ENCODE measurements at regions of chr12 and their contacts with region 1.

Region 1: DNA sequence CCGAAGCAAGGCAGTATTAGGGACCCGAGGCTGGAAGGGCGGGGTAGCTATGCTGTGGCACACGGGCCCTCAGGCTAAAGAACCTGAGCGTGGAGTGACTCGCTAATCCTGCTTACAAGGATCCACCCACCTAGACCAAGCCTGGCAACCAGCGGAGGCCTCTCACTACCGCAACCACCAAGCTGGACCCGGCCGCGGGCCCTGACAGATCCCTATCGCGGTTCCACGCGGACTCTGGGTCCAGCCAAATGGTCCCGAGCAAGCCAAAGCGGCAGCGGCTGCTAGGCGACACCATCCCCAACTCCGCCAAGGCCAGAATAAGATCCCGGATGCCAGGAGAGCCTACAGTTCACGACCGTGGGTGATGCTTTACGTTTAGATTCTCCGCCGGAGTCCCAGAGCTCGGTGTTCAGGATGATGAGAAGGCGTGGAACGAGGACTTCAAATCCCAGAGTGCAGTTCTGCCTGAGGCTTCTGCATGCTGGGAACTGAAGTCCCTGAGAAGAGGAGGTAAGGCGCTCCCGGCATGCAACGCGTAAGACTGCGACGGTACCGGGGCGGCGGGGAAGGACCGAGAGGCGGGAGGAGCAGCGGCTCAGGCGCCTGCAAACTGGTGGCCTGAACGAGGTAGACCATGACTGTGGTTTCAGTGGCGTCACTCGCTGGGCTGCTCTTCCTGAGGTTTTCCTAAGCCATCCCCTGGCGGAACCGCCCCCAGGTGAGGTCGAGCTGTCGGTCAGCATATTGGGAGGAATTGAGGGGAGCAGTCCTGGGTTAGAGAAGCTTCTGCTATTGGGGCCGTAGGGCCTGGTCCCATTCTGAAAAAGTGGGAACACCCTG is at the starts of genes CEP290 and TMTC3:
- DNase-seq: peak; percentile 100
- H3K4me3 ChIP-seq: peak within 1 kb of the TSS; percentile 80 to 82 (median 82)
- H3K27ac ChIP-seq: peak within 1 kb of the TSS; percentile 90
- H3K4me1 ChIP-seq: peaks cover 31% of the 10 kb centered on the region
- H3K27me3 ChIP-seq: no peaks in the 10 kb centered on the region
- CTCF ChIP-seq: no peak
- total RNA-seq, gene CEP290: 20.0 to 20.5 TPM
- total RNA-seq, gene TMTC3: 46.3 to 97.0 TPM

Region 2: DNA sequence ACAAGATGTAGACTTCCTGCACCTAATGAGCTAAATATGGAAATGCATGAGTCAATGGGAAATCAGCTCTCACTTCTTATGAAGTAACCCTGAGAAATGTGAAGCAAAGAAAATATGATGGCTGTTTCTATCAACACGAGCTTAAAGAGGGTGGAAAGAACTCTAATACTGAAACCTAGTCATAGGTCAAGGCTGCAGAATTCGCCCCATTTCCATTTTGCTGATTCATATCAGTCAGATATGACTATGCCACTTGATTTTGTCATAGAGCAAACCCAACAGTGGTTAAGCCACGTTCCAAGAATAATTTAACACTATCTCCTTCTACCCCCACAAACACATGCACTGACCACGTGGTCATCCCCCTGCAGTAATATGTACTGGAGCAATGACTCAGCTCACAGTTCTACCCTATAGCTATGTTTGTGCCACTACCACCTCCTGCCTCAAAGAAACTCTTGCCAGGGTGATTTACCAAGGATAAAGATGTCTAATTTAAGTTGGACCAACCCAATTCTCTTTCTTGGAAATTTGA is 157.6 kb after region 1 on chr12:
- CTCF ChIA-PET with region 1: no interaction called
- dilution Hi-C with region 1: no loop called
- in situ Hi-C with region 1: no loop called
- intact Hi-C with region 1: loop called (anchors 2 kb)
- DNase-seq: peak; percentile 98
- H3K4me3 ChIP-seq: no peak overlapping the region
- H3K27ac ChIP-seq: peak overlapping the region; percentile 90
- H3K4me1 ChIP-seq: peaks cover 17% of the 10 kb centered on the region
- H3K27me3 ChIP-seq: no peaks in the 10 kb centered on the region
- CTCF ChIP-seq: no peak

Region 3: DNA sequence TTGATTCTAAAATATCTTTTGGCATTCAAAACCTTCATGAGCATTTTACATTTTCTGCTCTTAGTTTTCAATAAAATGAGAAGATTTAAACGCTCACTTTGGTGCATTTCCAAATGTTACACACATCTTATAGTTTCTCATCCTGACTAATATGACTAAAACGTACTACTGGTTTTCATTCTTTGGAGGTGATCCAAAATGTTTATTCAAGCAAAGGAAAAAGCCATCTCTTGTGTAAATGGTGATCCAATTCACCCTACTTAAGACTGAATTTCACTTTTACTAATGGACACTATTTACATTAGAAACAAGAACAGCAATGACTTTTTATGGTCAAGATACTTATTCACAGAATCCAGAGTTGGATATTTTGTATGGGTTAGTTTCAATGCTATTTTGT is 351.6 kb after region 1 on chr12:
- CTCF ChIA-PET with region 1: no interaction called
- dilution Hi-C with region 1: no loop called
- in situ Hi-C with region 1: no loop called
- intact Hi-C with region 1: loop called (anchors 10 kb)
- DNase-seq: peak; percentile 74
- H3K4me3 ChIP-seq: no peak overlapping the region
- H3K27ac ChIP-seq: peak overlapping the region; percentile 25
- H3K4me1 ChIP-seq: no peaks in the 10 kb centered on the region
- H3K27me3 ChIP-seq: no peaks in the 10 kb centered on the region
- CTCF ChIP-seq: no peak

Region 4: DNA sequence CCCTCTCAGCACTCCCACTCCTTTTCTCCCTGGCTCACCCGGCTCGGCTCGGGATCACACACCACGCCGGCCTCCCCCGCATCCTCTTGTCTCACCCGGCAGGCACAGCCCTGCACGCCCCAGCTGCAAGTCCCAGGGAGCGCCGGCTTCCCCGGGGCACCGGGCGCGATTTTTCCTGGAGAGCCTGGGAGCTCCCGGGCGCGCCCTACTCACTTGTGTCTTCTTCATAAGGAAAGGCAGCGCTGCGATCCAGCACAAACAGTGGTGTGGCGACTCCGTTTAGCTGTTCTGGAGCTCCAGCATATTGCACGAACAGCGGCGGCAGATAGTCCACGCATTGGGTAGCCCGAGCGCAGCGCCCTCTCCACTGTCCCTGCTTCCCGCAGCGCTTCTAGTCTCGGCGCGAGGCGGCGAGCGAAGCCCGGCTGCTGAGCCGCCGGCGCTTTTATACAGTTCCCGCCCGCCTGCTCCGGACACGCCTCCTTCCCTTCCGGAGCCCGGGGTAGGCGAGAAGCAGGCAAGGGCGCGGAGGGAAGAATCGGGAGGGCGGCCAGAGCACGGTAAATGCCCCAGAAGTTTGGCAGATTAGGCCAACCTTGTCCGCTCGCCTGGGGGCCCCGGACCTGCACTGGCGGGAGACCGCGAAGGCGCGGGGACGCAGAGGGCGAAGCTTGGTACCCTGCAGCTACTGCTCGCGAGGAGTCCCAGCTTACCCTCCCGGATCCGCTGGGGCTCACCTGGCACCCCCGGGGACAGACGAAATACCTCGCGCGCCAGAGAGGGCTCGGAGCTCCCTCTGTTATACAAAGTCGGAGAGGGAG is 438.3 kb after region 1 on chr12 and contains the start of gene KITLG:
- CTCF ChIA-PET with region 1: no interaction called
- dilution Hi-C with region 1: no loop called
- in situ Hi-C with region 1: no loop called
- intact Hi-C with region 1: loop called (anchors 5 kb)
- DNase-seq: peak; percentile 90
- H3K4me3 ChIP-seq: peak within 1 kb of the TSS; percentile 96 to 99 (median 98)
- H3K27ac ChIP-seq: peak within 1 kb of the TSS; percentile 69
- H3K4me1 ChIP-seq: peaks cover 22% of the 10 kb centered on the region
- H3K27me3 ChIP-seq: no peaks in the 10 kb centered on the region
- CTCF ChIP-seq: peak; percentile 13 to 63
- total RNA-seq, gene KITLG: 26.2 to 45.3 TPM

Measured in mammary epithelial cell (primary cell).